Activated naive CD4-positive, alpha-beta T cell treated with anti-CD3 and anti-CD28 coated beads for 36 hours (primary cell): ENCODE measurements at regions of chr11 and their contacts with region 1.

Region 1: GRCh38 chr11:73995247-73995646 is 12.6 kb upstream of the UCP2 start:
- DNase-seq: no peak
- H3K4me3 Mint-ChIP-seq: peak overlapping the region; percentile 44
- H3K27ac Mint-ChIP-seq: peak overlapping the region; percentile 85
- H3K4me1 Mint-ChIP-seq: peaks cover 68% of the 10 kb centered on the region
- H3K27me3 Mint-ChIP-seq: no peaks in the 10 kb centered on the region

Region 2: DNA sequence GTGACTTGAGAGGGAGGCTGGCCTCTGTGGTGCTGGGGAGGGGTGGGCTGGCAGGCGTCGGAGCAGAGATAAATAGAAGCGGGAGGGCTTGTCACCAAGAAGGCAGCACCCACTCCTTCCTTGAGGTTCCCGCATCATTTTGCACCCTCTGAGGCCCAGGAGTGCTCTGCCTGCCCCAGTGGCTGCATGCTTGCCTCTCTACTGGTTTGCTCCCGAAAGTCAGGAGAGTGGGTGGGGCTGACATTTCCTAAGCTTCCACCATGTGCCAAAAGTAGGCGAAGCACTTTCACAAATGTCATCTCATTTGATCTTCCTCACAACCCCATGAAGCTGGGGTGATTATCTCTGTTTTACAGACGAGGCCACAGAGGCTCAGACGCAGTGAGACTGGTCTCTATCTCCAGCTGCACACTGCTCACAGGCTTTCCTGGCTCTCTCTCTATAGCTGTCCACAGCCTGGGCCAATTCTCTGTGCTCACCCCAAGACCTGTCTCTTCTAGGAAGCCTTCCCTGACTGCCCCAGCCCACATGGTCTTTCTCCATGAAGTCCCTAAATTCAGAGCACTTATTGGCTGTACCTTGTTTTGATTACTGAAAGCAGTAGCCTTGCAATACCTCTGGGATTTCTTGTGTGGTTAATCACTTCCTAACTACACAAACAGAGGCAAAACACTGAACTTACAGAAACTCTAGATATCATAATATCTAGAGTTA is 16.3 kb after region 1 on chr11:
- CTCF ChIA-PET with region 1: interaction called, 3 read pairs
- intact Hi-C with region 1: loop called (anchors 1 kb)
- DNase-seq: peak; percentile 72
- H3K4me3 Mint-ChIP-seq: no peak overlapping the region
- H3K27ac Mint-ChIP-seq: peak overlapping the region; percentile 92
- H3K4me1 Mint-ChIP-seq: peaks cover 77% of the 10 kb centered on the region
- H3K27me3 Mint-ChIP-seq: no peaks in the 10 kb centered on the region

Region 3: GRCh38 chr11:74366576-74366975 is 371.3 kb after region 1 on chr11:
- CTCF ChIA-PET with region 1: no interaction called
- intact Hi-C with region 1: no loop called
- DNase-seq: no peak
- H3K4me3 Mint-ChIP-seq: no peak overlapping the region
- H3K27ac Mint-ChIP-seq: no peak overlapping the region
- H3K4me1 Mint-ChIP-seq: no peaks in the 10 kb centered on the region
- H3K27me3 Mint-ChIP-seq: no peaks in the 10 kb centered on the region